BJ (cell line): ENCODE measurements at regions of chr15 and their contacts with region 1.

Region 1: GRCh38 chr15:76235186-76235826 is 76.0 kb downstream of the ETFA start:
- DNase-seq: peak; percentile 15
- H3K4me3 ChIP-seq: no peak overlapping the region
- H3K27me3 ChIP-seq: no peaks in the 10 kb centered on the region
- CTCF ChIP-seq: peak; percentile 52

Region 2: DNA sequence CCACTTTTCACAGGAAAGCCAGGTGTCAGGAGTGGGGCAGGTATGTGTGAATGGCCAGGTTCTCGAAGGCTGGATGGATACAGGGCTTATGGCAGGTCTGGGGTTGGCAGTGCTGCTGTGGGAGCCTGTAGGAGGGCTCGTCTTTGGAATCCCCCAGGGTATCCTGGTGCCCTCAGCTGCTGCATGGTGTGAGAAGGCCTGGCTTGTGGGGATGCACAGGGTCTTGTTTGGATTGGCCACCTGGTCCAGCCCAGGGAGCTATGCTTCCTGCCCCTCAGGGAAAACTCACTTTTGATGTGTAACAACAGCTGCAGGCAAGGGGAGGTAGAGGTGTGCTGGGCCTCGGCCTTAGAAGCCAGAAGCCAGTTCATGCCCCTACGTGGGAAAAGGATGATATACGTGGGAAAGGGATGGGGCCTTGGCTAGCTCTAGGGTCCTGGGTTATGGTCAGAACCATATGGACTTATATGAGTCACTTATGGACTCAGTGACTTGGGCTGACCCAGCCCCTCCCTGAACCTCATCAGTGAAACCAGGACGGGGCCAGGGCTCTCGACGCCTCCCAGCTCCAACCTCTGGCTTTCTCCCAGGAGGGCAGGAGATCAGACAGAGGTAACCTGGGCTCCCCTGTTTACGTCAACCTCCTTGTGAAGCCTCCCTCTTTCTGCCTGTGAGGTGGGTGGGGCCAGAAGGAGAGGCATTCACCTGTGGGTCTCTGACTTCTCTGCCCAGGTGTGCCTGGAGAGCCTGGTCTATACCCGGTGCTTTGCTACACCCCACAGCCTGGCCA is 484.9 kb before region 1 on chr15:
- CTCF ChIA-PET with region 1: no interaction called
- POLR2A ChIA-PET with region 1: no interaction called
- DNase-seq: no peak
- H3K4me3 ChIP-seq: no peak overlapping the region
- H3K27me3 ChIP-seq: no peaks in the 10 kb centered on the region
- CTCF ChIP-seq: no peak

Region 3: DNA sequence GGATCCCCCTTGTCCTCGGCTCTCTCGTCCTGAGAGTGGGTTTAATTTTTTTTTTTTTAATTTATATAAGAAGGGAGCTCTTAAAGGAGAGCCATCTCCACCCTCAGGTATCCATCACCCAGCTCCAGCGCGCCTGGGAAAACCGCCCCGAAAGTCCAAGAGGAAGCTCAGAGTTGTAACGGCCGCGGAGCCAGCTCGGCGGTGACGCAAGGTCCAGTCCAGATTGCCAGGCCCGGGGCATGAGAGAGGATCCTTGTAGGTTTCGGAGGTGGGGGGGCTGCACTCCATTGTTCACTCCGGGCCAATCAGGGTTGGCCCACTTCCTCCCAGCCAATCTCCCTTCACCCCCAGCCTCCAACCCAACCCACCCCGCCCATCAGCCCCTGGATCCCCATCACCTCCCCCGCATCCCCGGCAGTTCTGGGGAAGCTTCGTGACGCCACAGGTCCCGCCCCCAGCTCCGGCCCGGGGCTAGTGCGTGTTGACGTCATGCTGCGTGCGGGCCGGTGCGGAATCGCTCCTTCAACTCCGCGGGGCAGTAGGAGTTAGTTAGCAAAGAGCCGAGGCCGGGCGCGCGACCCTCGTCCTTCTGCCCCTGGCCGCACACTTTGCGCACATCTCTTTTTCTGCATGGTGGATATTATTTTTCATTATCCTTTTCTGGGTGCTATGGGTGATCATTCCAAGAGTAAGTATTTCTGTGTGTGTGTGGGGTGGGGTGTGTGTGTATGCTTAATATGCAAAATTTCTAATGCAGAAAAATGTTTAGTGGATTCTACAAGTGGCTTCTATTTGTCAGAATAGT is 101.2 kb after region 1 on chr15 and contains the start of gene ISL2:
- CTCF ChIA-PET with region 1: interaction called, 14 read pairs
- POLR2A ChIA-PET with region 1: no interaction called
- DNase-seq: peak; percentile 95
- H3K4me3 ChIP-seq: peak within 1 kb of the TSS; percentile 74
- H3K27me3 ChIP-seq: no peaks in the 10 kb centered on the region
- CTCF ChIP-seq: no peak
- polyA plus RNA-seq, gene ISL2: 5.0 and 7.7 TPM in 2 replicates

Region 4: GRCh38 chr15:76866716-76867321 is 631.5 kb after region 1 on chr15:
- CTCF ChIA-PET with region 1: interaction called, 14 read pairs
- POLR2A ChIA-PET with region 1: no interaction called
- DNase-seq: peak; percentile 30
- H3K4me3 ChIP-seq: no peak overlapping the region
- H3K27me3 ChIP-seq: no peaks in the 10 kb centered on the region
- CTCF ChIP-seq: peak; percentile 62